ENCODE measurements at regions of chr1 and their contacts with region 1.

Region 1: DNA sequence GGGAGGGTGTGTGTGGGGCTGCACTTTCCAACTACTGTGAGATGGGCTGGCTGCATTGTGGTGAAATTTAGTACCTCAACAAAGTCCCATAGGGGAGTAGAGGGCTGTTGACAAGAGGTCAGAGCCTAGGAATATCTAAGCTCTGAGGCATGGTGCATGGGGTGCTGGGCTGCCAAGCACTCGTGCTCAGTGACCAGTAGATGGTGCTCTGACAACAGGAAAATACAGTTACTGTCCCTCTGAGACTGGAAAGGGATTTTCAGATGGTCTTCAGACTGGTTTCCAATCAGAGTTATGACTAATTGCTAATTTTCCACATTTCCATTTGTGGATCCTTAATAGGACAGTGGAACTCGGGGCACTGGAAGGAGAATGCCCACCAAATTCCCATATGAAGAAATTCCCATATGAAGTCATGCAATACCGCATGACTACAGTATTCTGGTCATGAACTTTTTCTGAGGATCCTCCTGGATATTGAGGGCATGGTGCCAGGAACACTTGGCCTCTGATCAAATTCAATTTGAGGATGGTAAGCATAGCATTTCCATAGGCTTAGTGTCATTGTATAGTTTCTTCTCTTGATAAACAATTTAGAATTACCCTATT is 4.1 kb upstream of the CACNA1E start:
- DNase-seq: peak; percentile 71
- ATAC-seq: peak; percentile 84

Region 2: DNA sequence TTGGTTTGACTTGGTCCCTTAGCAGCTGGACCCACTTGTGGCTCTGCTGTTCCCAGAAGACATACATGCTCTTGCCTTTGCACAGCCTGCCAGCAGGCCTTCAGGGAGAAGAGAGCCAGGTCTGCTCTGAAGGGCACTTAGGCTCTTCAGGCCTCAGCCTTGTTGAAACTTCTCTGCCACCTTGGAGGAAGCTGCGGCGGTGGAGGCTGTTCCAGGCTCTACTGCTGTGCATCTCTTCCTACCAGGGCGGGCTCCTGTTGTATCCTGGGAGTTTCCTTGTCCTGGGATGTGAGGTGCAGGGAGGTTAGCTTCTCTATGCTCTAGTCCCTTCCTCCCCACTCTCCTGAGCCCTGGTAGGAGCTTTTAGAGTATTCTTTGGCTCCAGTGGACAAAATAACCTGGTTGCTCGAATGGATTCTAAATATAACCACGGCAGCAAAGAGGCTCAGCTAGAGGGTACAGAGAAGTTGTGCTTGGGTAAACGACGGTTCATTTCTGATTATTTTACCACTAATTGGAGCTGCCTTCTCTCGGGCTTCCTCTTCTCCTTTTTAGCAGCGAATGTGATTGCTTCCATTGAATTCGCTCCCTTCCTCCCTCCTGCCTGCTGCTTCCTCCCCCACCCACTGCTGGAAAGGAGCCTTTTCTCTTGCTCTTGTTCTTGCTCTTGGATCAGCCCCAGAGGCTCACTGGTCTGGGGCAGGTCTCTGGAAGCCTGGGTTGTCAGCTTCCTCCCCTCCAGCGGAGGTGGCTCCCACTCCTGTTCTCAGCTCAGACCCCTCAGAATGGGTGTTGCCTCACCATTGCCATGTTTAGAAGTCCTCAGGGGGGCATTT is 122.5 kb before region 1 on chr1:
- intact Hi-C with region 1: no loop called
- DNase-seq: no peak
- ATAC-seq: peak; percentile 51

Region 3: GRCh38 chr1:181397845-181398244 is 81.4 kb before region 1 on chr1:
- intact Hi-C with region 1: no loop called
- DNase-seq: no peak
- ATAC-seq: no peak

Region 4: GRCh38 chr1:181676269-181676668 is 197.0 kb after region 1 on chr1:
- intact Hi-C with region 1: loop called (anchors 1 kb)
- DNase-seq: no peak
- ATAC-seq: no peak

Region 5: GRCh38 chr1:181936768-181937581 is 457.7 kb after region 1 on chr1:
- intact Hi-C with region 1: loop called (anchors 2 kb)
- DNase-seq: peak; percentile 27
- ATAC-seq: no peak

Region 6: GRCh38 chr1:182084487-182085316 is 605.5 kb after region 1 on chr1:
- intact Hi-C with region 1: loop called (anchors 5 kb)
- DNase-seq: peak; percentile 91
- ATAC-seq: peak; percentile 93

Measured in Right ventricle myocardium inferior (tissue), 1 donor.